ENCODE measurements at regions of chr1 and their contacts with region 1.

Region 1: DNA sequence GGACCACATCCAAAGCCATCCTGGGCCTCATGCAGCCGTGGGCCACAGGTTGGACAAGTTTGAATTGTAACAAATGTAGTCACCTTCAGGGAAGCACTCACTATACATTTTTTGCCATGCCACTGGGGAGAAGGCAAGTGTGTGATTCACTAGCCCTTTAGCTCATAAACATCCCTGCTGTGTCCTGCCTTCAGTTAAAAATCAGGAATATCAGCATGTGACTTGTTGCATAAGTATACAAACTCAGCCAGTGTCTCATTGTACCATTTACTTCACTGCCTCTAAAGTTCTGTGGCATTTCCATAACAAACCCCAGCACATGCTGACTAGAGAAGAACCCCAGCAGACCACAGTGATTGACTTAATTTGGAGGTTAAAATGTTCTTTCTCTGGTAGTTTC is 142.0 kb upstream of the C1orf105 start:
- DNase-seq: no peak
- ATAC-seq: peak; percentile 49

Region 2: GRCh38 chr1:172265905-172266304 is 12.6 kb before region 1 on chr1:
- intact Hi-C with region 1: loop called (anchors 2 kb)
- DNase-seq: no peak
- ATAC-seq: no peak